BJ (cell line): ENCODE measurements at regions of chr12 and their contacts with region 1.

Region 1: GRCh38 chr12:52884526-52885293 is 20.2 kb downstream of the KRT8 start:
- DNase-seq: no peak
- H3K4me3 ChIP-seq: no peak overlapping the region
- H3K27me3 ChIP-seq: no peaks in the 10 kb centered on the region
- CTCF ChIP-seq: peak; percentile 89

Region 2: GRCh38 chr12:52903285-52903854 is 18.7 kb after region 1 on chr12:
- CTCF ChIA-PET with region 1: interaction called, 104 read pairs
- POLR2A ChIA-PET with region 1: no interaction called
- DNase-seq: no peak
- H3K4me3 ChIP-seq: peak overlapping the region; percentile 14
- H3K27me3 ChIP-seq: no peaks in the 10 kb centered on the region
- CTCF ChIP-seq: no peak

Region 3: GRCh38 chr12:52918351-52918750 is 33.6 kb after region 1 on chr12:
- CTCF ChIA-PET with region 1: interaction called, 37 read pairs
- POLR2A ChIA-PET with region 1: no interaction called
- DNase-seq: no peak
- H3K4me3 ChIP-seq: no peak overlapping the region
- H3K27me3 ChIP-seq: no peaks in the 10 kb centered on the region
- CTCF ChIP-seq: no peak

Region 4: DNA sequence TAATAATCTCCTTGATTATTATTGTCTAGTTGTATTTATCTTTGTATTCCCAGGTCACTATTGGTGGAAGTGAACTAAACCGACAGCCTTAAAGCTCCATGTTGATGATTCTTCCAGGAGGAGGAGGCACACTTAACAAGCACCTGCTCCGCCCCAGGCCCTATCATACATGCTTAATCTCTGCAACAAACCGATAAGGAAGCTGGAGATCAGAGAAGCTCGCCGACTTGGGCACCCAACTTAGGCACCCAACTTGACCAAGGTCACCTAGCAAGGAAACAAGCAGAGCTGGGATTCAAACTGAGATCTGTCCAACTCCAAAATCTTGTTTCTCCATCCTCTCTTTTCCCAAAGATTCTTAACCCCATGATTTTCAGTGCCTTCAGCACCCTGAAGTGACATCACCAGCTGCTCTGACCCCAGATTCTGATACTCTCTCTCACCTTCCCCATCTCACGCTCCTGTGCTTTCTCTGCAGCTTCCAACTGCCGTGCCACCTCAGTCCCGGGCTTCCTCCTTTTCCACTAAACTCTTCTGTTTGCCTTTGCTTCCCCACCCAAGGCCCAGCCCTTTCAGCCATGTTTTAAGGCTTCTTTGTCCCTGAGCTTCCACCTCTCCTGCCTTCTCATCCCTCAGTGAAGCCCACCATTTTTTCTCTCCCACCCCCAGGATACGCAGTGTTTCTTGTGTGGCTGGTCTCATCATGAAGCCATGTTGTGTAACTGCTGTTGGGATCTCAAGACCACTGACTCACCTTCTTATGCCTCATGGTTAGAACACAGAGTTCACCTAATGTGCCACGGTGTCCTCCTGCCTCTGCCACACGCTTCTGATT is 57.6 kb after region 1 on chr12:
- CTCF ChIA-PET with region 1: interaction called, 25 read pairs
- POLR2A ChIA-PET with region 1: no interaction called
- DNase-seq: no peak
- H3K4me3 ChIP-seq: no peak overlapping the region
- H3K27me3 ChIP-seq: no peaks in the 10 kb centered on the region
- CTCF ChIP-seq: no peak

Region 5: DNA sequence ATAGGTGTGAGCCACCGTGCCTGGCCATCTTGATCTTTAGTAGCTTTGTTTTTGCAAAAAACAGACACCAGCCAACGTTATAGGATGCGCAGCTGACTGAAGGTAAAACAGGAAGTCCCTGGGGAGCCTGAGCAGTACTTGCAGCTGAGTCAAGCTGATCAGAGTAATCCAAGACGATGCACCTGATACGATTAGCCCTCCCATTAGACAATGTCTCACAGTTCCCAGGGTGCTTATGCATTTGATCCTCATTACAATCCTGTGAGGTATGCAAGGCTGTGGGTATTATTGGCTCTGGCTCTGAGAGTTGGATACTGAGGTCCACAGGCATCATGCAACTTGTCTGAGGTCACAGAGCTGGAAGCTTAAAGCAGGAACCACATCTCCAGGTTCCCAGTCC is 72.3 kb after region 1 on chr12:
- CTCF ChIA-PET with region 1: interaction called, 23 read pairs
- POLR2A ChIA-PET with region 1: no interaction called
- DNase-seq: no peak
- H3K4me3 ChIP-seq: no peak overlapping the region
- H3K27me3 ChIP-seq: no peaks in the 10 kb centered on the region
- CTCF ChIP-seq: no peak

Region 6: GRCh38 chr12:52980693-52981423 is 96.1 kb after region 1 on chr12:
- CTCF ChIA-PET with region 1: interaction called, 722 read pairs
- POLR2A ChIA-PET with region 1: interaction called, 4 read pairs
- DNase-seq: peak; percentile 51
- H3K4me3 ChIP-seq: no peak overlapping the region
- H3K27me3 ChIP-seq: no peaks in the 10 kb centered on the region
- CTCF ChIP-seq: peak; percentile 95

Region 7: DNA sequence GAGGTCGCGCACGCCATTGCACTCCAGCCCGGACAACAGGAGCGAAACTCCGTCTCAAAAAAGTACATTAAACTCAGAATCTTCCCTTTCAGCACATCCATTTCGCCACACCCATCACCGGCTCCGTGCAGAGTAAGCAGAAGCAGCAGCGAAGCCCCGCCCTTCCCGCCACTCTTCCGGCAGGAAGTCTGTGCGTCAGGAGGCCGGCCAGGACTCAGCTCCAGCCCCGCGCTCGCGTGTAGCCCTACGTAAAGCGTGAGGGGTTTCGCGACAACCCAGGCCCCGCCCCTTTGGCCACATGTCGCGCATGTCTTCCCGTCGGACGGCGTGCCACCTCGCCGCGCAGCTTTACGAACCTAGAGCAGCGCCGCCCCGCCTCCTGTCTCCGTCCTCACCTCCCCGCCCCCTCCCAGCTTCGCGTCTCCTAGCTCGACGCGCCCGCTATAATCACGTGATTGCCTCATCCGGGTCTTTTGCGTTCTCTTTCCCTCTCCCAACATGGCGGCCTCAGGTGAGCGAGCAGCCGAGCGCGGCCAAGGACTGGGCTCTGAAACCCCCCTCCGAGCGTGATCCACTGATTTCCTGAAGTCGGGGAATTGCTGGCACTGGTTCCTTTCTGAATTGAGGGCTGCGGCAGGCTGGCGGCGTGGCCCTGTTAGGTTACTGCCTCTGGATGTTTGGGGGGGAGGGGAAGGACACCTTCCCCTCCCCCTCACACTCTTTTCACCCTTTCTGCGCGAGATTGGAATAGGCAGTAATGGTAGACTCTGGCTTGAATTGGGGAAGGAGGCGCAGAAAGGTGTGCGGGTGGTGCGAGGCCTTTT is 121.5 kb after region 1 on chr12 and contains the start of gene EIF4B:
- CTCF ChIA-PET with region 1: interaction called, 11 read pairs
- POLR2A ChIA-PET with region 1: no interaction called
- DNase-seq: peak; percentile 97
- H3K4me3 ChIP-seq: peak within 1 kb of the TSS; percentile 99
- H3K27me3 ChIP-seq: no peaks in the 10 kb centered on the region
- CTCF ChIP-seq: no peak
- polyA plus RNA-seq, gene EIF4B: 296 and 496 TPM in 2 replicates